ENCODE measurements at regions of chr5 and their contacts with region 1.

Region 1: DNA sequence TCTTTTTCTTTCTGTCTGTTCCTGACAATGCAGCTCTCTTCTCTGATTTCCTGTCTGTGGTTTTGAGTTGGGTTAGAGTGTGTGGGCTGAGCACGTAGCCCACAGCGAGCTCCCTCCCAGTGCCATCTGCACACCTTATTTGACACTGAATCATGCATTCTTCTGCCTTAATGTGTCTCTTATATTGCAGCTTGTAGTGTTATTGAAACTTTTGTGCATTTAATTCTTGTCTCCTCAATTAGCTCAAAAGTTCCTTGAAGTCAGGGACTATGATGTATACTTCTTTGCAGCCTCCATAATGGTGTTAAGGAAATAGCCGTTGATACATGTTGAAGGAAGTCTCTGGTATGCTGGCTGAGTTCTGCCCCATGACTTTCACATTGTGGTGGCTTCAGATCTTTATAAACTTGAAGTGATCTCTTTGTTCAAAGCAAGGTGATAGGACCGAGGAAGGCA is 576.2 kb upstream of the CLINT1 start:
- DNase-seq: peak; percentile 81
- H3K4me3 Mint-ChIP-seq: peak overlapping the region; percentile 76
- H3K27ac Mint-ChIP-seq: peak overlapping the region; percentile 83
- H3K4me1 Mint-ChIP-seq: peaks cover 48% of the 10 kb centered on the region
- H3K27me3 Mint-ChIP-seq: no peaks in the 10 kb centered on the region

Region 2: GRCh38 chr5:158511454-158511853 is 76.3 kb after region 1 on chr5:
- intact Hi-C with region 1: loop called (anchors 5 kb)
- DNase-seq: peak; percentile 59
- H3K4me3 Mint-ChIP-seq: no peak overlapping the region
- H3K27ac Mint-ChIP-seq: no peak overlapping the region
- H3K4me1 Mint-ChIP-seq: peaks cover 29% of the 10 kb centered on the region
- H3K27me3 Mint-ChIP-seq: no peaks in the 10 kb centered on the region

Measured in activated CD4-positive, alpha-beta T cell treated with anti-CD3 and anti-CD28 coated beads, Interleukin-2, amount 10 ng/mL, durations not matched to agents 24 days and 14 days (primary cell).